Activated B cell treated with CpG ODN at 0.5 μM for 24 hours (primary cell): ENCODE measurements at regions of chr11 and their contacts with region 1.

Region 1: GRCh38 chr11:72985645-72986044 is 156.5 kb downstream of the FCHSD2 start:
- DNase-seq: no peak
- ATAC-seq: no peak
- H3K4me3 Mint-ChIP-seq: no peak overlapping the region
- H3K27ac Mint-ChIP-seq: peak overlapping the region; percentile 79
- H3K4me1 Mint-ChIP-seq: peaks cover 69% of the 10 kb centered on the region
- H3K27me3 Mint-ChIP-seq: no peaks in the 10 kb centered on the region
- CTCF ChIP-seq: no peak

Region 2: GRCh38 chr11:72935700-72936099 is 49.9 kb before region 1 on chr11:
- CTCF ChIA-PET with region 1: no interaction called
- POLR2A ChIA-PET with region 1: no interaction called
- intact Hi-C with region 1: loop called (anchors 5 kb)
- DNase-seq: no peak
- ATAC-seq: no peak
- H3K4me3 Mint-ChIP-seq: no peak overlapping the region
- H3K27ac Mint-ChIP-seq: peak overlapping the region; percentile 68
- H3K4me1 Mint-ChIP-seq: peaks cover 47% of the 10 kb centered on the region
- H3K27me3 Mint-ChIP-seq: no peaks in the 10 kb centered on the region
- CTCF ChIP-seq: no peak

Region 3: GRCh38 chr11:73028611-73029010 is 43.0 kb after region 1 on chr11:
- CTCF ChIA-PET with region 1: no interaction called
- POLR2A ChIA-PET with region 1: no interaction called
- intact Hi-C with region 1: loop called (anchors 2 kb)
- DNase-seq: no peak
- ATAC-seq: peak; percentile 47
- H3K4me3 Mint-ChIP-seq: no peak overlapping the region
- H3K27ac Mint-ChIP-seq: peak overlapping the region; percentile 81
- H3K4me1 Mint-ChIP-seq: peaks cover 57% of the 10 kb centered on the region
- H3K27me3 Mint-ChIP-seq: no peaks in the 10 kb centered on the region
- CTCF ChIP-seq: no peak